ENCODE measurements at regions of chr20 and their contacts with region 1.

Region 1: GRCh38 chr20:44885392-44886265 is at the start of gene YWHAB:
- DNase-seq: peak; percentile 93 to 99 (median 98)
- ATAC-seq: peak; percentile 91
- H3K4me3 ChIP-seq: peak within 1 kb of the TSS; percentile 91
- H3K4me3 Mint-ChIP-seq: peak within 1 kb of the TSS; percentile 98
- H3K27ac ChIP-seq: peak within 1 kb of the TSS; percentile 89 to 93
- H3K27ac Mint-ChIP-seq: peak within 1 kb of the TSS; percentile 89
- H3K4me1 ChIP-seq: peaks cover 38% of the 10 kb centered on the region
- H3K4me1 Mint-ChIP-seq: peaks cover 80% of the 10 kb centered on the region
- H3K27me3 ChIP-seq: no peaks in the 10 kb centered on the region
- H3K27me3 Mint-ChIP-seq: no peaks in the 10 kb centered on the region
- CTCF ChIP-seq: no peak
- total RNA-seq, gene YWHAB: 163 to 167 TPM

Region 2: GRCh38 chr20:44210422-44211176 is 675.0 kb before region 1 on chr20 and contains the start of gene OSER1:
- CTCF ChIA-PET with region 1: no interaction called
- POLR2A ChIA-PET with region 1: no interaction called
- intact Hi-C with region 1: loop called (anchors 5 kb)
- DNase-seq: peak; percentile 96 to 100 (median 98)
- ATAC-seq: peak; percentile 83
- H3K4me3 ChIP-seq: peak within 1 kb of the TSS; percentile 78
- H3K4me3 Mint-ChIP-seq: peak within 1 kb of the TSS; percentile 92
- H3K27ac ChIP-seq: peak within 1 kb of the TSS; percentile 95 to 98
- H3K27ac Mint-ChIP-seq: peak within 1 kb of the TSS; percentile 99
- H3K4me1 ChIP-seq: peaks cover 29% of the 10 kb centered on the region
- H3K4me1 Mint-ChIP-seq: peaks cover 67% of the 10 kb centered on the region
- H3K27me3 ChIP-seq: no peaks in the 10 kb centered on the region
- H3K27me3 Mint-ChIP-seq: no peaks in the 10 kb centered on the region
- CTCF ChIP-seq: no peak
- total RNA-seq, gene OSER1: 172 TPM

Region 3: DNA sequence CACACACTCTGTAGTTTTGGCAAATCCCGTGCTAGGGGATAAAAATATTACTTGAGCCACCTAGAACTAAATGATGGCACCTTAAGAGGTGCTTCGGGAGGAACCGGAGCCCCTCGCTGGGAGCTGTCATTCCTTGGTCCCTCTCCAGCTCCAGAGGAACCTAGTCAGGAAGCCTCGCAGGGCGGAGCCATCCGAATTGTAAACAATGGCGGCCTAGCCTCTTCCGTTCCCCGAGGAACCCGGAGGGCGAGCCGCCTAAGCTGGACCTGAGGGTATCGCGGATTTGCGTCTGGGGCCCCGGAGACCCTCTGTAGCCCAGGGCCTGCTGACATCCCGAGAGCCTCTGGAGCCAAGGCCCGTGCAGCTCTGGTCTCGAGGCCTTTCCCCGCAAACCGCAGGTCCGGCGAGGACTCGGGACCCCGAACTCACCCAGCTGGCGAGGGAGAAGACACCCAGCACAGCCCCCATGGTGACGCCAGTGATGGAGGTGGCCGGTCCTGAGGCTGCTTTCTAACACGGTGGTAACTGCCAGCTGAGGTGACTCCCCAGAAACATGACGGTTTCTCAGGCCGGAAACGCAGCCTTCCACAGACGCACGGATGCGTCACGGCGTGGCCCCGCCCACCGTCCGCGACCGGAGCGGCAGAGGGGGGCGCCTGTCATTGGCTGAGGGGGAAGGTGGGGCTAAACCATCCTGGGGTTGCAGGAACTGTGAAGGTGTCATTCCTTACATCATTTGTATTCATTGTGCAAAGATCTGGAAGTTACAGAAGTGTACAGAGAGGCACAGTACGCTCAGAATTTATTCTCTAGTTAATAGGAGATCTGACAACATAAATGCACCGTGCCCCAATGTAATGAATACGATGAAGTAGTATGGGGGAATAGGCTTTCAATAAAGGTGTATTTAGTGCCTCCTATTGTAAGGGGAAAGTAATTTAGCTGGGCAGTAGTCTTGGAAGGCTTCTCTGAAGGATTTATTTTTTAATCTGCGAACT is 363.8 kb before region 1 on chr20 and contains the start of gene SERINC3:
- CTCF ChIA-PET with region 1: no interaction called
- POLR2A ChIA-PET with region 1: no interaction called
- intact Hi-C with region 1: loop called in 1 of 2 experiments (anchors 10 kb)
- DNase-seq: peak; percentile 90 to 99 (median 97)
- ATAC-seq: peak; percentile 93
- H3K4me3 ChIP-seq: peak within 1 kb of the TSS; percentile 98
- H3K4me3 Mint-ChIP-seq: peak within 1 kb of the TSS; percentile 89
- H3K27ac ChIP-seq: peak within 1 kb of the TSS; percentile 95 to 99
- H3K27ac Mint-ChIP-seq: peak within 1 kb of the TSS; percentile 93
- H3K4me1 ChIP-seq: peaks cover 44% of the 10 kb centered on the region
- H3K4me1 Mint-ChIP-seq: peaks cover 58% of the 10 kb centered on the region
- H3K27me3 ChIP-seq: no peaks in the 10 kb centered on the region
- H3K27me3 Mint-ChIP-seq: no peaks in the 10 kb centered on the region
- CTCF ChIP-seq: peak; percentile 46
- total RNA-seq, gene SERINC3: 39.5 to 40.2 TPM

Region 4: GRCh38 chr20:44909872-44910689 is 24.5 kb after region 1 on chr20 and contains the start of gene PABPC1L:
- CTCF ChIA-PET with region 1: interaction called, 6 read pairs
- POLR2A ChIA-PET with region 1: interaction called, 24 read pairs
- intact Hi-C with region 1: loop called (anchors 2 kb)
- DNase-seq: peak; percentile 33 to 88 (median 74)
- ATAC-seq: peak; percentile 95
- H3K4me3 ChIP-seq: peak within 1 kb of the TSS; percentile 86
- H3K4me3 Mint-ChIP-seq: peak within 1 kb of the TSS; percentile 85
- H3K27ac ChIP-seq: peak within 1 kb of the TSS in 1 of 2 donors; percentile 17
- H3K27ac Mint-ChIP-seq: peak within 1 kb of the TSS; percentile 68
- H3K4me1 ChIP-seq: peaks cover 22% of the 10 kb centered on the region
- H3K4me1 Mint-ChIP-seq: peaks cover 36% of the 10 kb centered on the region
- H3K27me3 ChIP-seq: no peaks in the 10 kb centered on the region
- H3K27me3 Mint-ChIP-seq: no peaks in the 10 kb centered on the region
- CTCF ChIP-seq: no peak
- total RNA-seq, gene PABPC1L: 22.8 to 27.5 TPM

Region 5: GRCh38 chr20:44966030-44966961 is 80.7 kb after region 1 on chr20 and contains the start of gene STK4:
- CTCF ChIA-PET with region 1: no interaction called
- POLR2A ChIA-PET with region 1: interaction called, 12 read pairs
- intact Hi-C with region 1: loop called (anchors 2 kb)
- DNase-seq: peak; percentile 92 to 99 (median 96)
- ATAC-seq: peak; percentile 78
- H3K4me3 ChIP-seq: peak within 1 kb of the TSS; percentile 68
- H3K4me3 Mint-ChIP-seq: peak within 1 kb of the TSS; percentile 92
- H3K27ac ChIP-seq: peak within 1 kb of the TSS; percentile 88 to 90
- H3K27ac Mint-ChIP-seq: peak within 1 kb of the TSS; percentile 86
- H3K4me1 ChIP-seq: peaks cover 16% of the 10 kb centered on the region
- H3K4me1 Mint-ChIP-seq: peaks cover 51% of the 10 kb centered on the region
- H3K27me3 ChIP-seq: no peaks in the 10 kb centered on the region
- H3K27me3 Mint-ChIP-seq: no peaks in the 10 kb centered on the region
- CTCF ChIP-seq: peak; percentile 70
- total RNA-seq, gene STK4: 265 to 277 TPM

Region 6: GRCh38 chr20:45368221-45368980 is 482.8 kb after region 1 on chr20:
- CTCF ChIA-PET with region 1: no interaction called
- POLR2A ChIA-PET with region 1: no interaction called
- intact Hi-C with region 1: loop called in 1 of 2 experiments (anchors 5 kb)
- DNase-seq: peak in 8 of 14 experiments; percentile 10 to 82 (median 40)
- ATAC-seq: peak; percentile 71
- H3K4me3 ChIP-seq: no peak overlapping the region
- H3K4me3 Mint-ChIP-seq: peak overlapping the region; percentile 55
- H3K27ac ChIP-seq: peak overlapping the region in 1 of 2 donors; percentile 38
- H3K27ac Mint-ChIP-seq: peak overlapping the region; percentile 73
- H3K4me1 ChIP-seq: peaks cover 68% of the 10 kb centered on the region
- H3K4me1 Mint-ChIP-seq: peaks cover 80% of the 10 kb centered on the region
- H3K27me3 ChIP-seq: no peaks in the 10 kb centered on the region
- H3K27me3 Mint-ChIP-seq: no peaks in the 10 kb centered on the region
- CTCF ChIP-seq: no peak

Region 7: DNA sequence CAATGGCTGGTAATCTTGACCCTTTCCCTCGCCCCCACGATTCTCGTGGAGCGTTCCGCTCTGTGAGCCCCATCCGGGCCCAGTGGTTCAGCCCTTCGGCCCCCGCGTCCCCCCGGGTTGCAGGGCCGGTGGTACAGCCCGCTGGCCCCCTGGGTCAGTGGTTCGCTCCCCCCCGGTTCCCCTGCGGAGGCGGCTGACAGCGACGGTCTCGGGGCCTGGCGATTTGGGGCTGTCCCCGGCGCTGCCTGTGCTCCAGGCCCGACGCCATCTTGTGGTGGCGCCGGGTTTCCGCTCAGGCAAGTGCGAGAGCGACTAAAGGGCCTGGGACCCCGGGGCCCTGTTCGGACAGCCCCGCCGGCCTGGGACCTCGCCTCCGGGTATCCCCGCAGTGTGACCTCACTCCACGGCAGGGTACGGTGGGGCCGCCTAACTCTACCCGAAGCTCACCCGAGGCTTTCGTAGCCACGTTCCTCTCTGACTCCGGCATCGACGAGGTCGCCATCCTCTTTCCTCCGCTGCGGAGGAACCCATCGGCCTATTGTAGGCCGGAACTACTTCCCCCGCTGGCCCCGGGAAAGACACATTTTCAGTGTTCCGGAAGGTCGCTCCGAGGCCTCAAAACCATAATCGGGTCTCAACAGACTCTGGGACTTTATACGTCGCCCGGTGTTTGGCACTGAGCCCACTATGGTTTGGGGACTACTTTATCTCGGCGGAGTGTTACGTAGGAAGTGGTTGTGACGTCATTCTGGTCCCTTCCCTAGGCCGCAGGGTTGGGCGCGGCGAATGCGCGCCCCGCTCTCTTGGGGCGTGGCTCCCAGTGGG is 1086.3 kb after region 1 on chr20 and contains the start of gene ZNF335:
- CTCF ChIA-PET with region 1: no interaction called
- POLR2A ChIA-PET with region 1: no interaction called
- intact Hi-C with region 1: loop called in 1 of 2 experiments (anchors 10 kb)
- DNase-seq: peak; percentile 86 to 97 (median 94)
- ATAC-seq: peak; percentile 80
- H3K4me3 ChIP-seq: peak within 1 kb of the TSS; percentile 96
- H3K4me3 Mint-ChIP-seq: peak within 1 kb of the TSS; percentile 94
- H3K27ac ChIP-seq: peak within 1 kb of the TSS; percentile 99 to 100
- H3K27ac Mint-ChIP-seq: peak within 1 kb of the TSS; percentile 100
- H3K4me1 ChIP-seq: peaks cover 36% of the 10 kb centered on the region
- H3K4me1 Mint-ChIP-seq: peaks cover 28% of the 10 kb centered on the region
- H3K27me3 ChIP-seq: no peaks in the 10 kb centered on the region
- H3K27me3 Mint-ChIP-seq: peaks cover 4% of the 10 kb centered on the region
- CTCF ChIP-seq: no peak
- total RNA-seq, gene ZNF335: 67.3 to 74.6 TPM